IMR-90 (cell line): ENCODE measurements at regions of chr3 and their contacts with region 1.

Region 1: DNA sequence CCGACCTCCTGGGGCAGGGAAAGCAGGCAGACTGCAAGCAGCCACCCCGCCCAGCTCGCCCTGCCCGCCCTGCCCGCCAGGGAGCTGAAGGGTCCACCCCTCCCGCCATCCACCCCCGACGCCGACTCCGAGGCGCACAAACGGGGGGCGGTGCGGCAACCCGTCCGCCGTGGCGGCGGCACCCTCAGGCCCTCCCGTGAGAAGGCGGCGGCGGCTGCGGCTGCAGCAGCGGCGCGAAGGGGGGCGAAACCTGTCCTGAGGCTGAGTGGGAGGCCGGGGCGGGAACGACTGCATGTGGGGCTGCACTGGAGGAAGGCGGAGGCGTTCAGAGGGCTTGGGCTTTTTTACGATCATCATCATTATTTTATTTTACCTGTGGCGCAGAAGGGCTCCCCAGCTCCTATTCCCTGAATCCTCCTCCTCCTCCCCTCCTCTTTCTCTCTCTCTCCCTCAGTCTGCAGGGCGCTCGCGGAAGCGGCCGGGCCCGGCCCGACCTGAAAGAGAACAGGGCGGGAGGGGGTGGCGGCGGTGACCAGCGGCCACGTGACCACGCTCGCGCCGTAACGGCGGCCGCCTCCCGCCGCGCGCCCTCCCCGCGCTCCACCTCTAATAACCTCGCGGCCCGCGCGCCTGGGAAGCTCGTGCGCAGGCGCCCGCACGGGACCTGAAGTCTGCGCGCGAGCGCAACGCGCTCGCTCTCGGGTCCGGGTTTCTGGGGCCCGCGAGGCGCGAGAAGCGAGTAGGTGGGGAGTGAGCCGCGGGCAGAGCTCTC is at the start of gene TBC1D5:
- DNase-seq: peak; percentile 98
- ATAC-seq: peak; percentile 94
- H3K4me3 ChIP-seq: peak within 1 kb of the TSS; percentile 72
- H3K27ac ChIP-seq: peak within 1 kb of the TSS; percentile 76
- H3K4me1 ChIP-seq: peaks cover 4% of the 10 kb centered on the region
- H3K27me3 ChIP-seq: no peaks in the 10 kb centered on the region
- CTCF ChIP-seq: no peak
- POLR2A ChIP-seq: peak; percentile 76
- RAD21 ChIP-seq: no peak
- total RNA-seq, gene TBC1D5: 53.6 and 57.0 TPM in 2 replicates

Region 2: DNA sequence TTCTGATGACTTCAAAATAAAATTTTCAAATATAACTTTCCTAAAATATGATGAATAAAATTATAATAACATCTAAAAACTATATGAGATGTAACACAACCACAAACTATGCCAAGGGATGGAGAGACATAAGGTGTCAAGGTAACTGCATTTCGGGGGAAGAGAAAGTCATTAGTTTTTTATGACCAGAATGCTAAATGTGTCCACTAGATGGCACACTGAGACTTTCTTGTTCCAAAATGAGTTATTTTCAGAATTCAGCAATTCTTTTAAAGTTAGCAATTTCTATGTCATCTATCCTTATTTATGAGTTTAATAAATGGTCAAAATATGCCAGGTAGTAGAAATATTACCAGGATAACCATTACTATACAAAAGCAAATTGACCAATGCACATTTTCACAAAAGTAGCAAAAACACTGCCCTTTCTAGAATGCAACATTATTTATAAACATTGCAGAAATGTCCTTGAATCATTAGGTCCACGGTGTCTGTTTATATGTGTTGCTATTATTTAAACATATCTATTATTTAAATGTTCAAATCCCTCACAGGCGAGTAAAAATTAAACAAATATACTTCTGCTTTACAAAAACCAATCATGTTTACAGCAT is 483.4 kb before region 1 on chr3:
- CTCF ChIA-PET with region 1: no interaction called
- POLR2A ChIA-PET with region 1: no interaction called
- dilution Hi-C with region 1: no loop called
- in situ Hi-C with region 1: no loop called
- intact Hi-C with region 1: loop called (anchors 10 kb)
- DNase-seq: peak; percentile 39
- ATAC-seq: 0 out of 2 replicates have a peak, but pooled peaks have one; percentile 27
- H3K4me3 ChIP-seq: no peak overlapping the region
- H3K27ac ChIP-seq: no peak overlapping the region
- H3K4me1 ChIP-seq: no peaks in the 10 kb centered on the region
- H3K27me3 ChIP-seq: no peaks in the 10 kb centered on the region
- CTCF ChIP-seq: peak; percentile 70
- POLR2A ChIP-seq: no peak
- RAD21 ChIP-seq: peak; percentile 69

Region 3: GRCh38 chr3:17431004-17431403 is 311.3 kb before region 1 on chr3:
- CTCF ChIA-PET with region 1: no interaction called
- POLR2A ChIA-PET with region 1: no interaction called
- dilution Hi-C with region 1: no loop called
- in situ Hi-C with region 1: no loop called
- intact Hi-C with region 1: loop called (anchors 2 kb)
- DNase-seq: peak; percentile 53
- ATAC-seq: peak; percentile 70; the same call in 1 of the 2 replicates
- H3K4me3 ChIP-seq: no peak overlapping the region
- H3K27ac ChIP-seq: no peak overlapping the region
- H3K4me1 ChIP-seq: no peaks in the 10 kb centered on the region; the same call in 1 of the 2 replicates
- H3K27me3 ChIP-seq: no peaks in the 10 kb centered on the region
- CTCF ChIP-seq: peak; percentile 55
- POLR2A ChIP-seq: no peak
- RAD21 ChIP-seq: peak; percentile 64

Region 4: GRCh38 chr3:17473761-17474160 is 268.5 kb before region 1 on chr3:
- CTCF ChIA-PET with region 1: no interaction called
- POLR2A ChIA-PET with region 1: no interaction called
- dilution Hi-C with region 1: no loop called
- in situ Hi-C with region 1: no loop called
- intact Hi-C with region 1: loop called (anchors 5 kb)
- DNase-seq: peak; percentile 23
- ATAC-seq: no peak
- H3K4me3 ChIP-seq: no peak overlapping the region
- H3K27ac ChIP-seq: no peak overlapping the region
- H3K4me1 ChIP-seq: no peaks in the 10 kb centered on the region; the same call in 1 of the 2 replicates
- H3K27me3 ChIP-seq: no peaks in the 10 kb centered on the region
- CTCF ChIP-seq: peak; percentile 41
- POLR2A ChIP-seq: no peak
- RAD21 ChIP-seq: peak; percentile 40; the same call in 1 of the 2 replicates

Region 5: GRCh38 chr3:17645072-17645698 is 97.1 kb before region 1 on chr3:
- CTCF ChIA-PET with region 1: no interaction called
- POLR2A ChIA-PET with region 1: no interaction called
- dilution Hi-C with region 1: no loop called
- in situ Hi-C with region 1: no loop called
- intact Hi-C with region 1: loop called (anchors 2 kb)
- DNase-seq: peak; percentile 76
- ATAC-seq: peak; percentile 77
- H3K4me3 ChIP-seq: no peak overlapping the region
- H3K27ac ChIP-seq: no peak overlapping the region
- H3K4me1 ChIP-seq: peaks cover 1% of the 10 kb centered on the region
- H3K27me3 ChIP-seq: no peaks in the 10 kb centered on the region
- CTCF ChIP-seq: peak; percentile 72
- POLR2A ChIP-seq: no peak
- RAD21 ChIP-seq: peak; percentile 59